ENCODE measurements at regions of chr6 and their contacts with region 1.

Region 1: GRCh38 chr6:35973670-35974222 is 50.7 kb downstream of the SLC26A8 start:
- DNase-seq: no peak
- ATAC-seq: no peak
- H3K4me3 Mint-ChIP-seq: no peak overlapping the region
- H3K27ac Mint-ChIP-seq: no peak overlapping the region
- H3K4me1 Mint-ChIP-seq: no peaks in the 10 kb centered on the region
- H3K27me3 Mint-ChIP-seq: peaks cover 3% of the 10 kb centered on the region
- CTCF ChIP-seq: no peak

Region 2: DNA sequence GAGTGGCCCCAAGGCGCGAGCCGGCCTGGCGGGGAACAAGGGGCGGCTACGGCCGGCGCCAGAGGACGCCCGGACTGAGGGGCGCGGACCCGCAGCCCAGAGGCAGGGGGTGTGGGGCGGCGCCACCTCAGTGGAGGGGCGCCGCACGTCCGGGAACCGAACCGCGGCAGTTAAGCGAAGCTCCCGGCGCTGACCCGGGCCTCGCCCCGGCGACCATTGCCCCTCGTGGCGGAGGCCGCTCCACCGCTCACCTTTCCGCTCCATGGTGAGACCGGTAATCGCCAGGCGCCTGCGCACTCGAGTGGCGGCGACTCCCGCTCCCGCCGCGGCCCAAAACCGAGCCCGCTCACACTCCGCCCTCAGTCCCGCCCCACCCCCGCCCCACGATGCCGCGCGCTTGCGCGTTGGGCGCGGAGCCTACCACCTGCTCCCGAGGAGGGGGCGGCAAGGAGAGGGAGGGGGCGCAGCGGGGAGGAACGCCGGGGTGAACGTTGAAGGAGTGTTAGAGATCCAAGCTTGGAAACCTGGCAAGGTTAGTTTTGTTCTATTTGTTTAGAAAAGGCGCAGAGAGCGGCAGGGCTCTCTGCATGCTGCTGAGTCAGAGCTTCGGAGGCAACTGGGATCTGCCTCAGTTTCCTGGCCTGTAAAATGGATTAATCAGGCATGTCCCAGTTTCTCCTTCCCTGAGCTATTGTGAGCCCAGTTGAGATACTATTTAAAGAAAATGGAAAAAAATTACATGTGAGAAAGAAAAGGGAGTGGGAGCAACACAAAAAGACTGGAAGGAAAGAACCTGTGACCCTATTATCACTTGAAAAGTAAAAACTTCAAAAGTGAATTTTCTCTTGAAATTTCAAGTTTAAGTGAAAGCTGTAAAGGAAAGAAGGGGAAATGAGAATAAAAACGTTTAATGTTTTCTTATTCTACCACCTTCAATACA is 52.7 kb before region 1 on chr6 and contains the start of gene SRPK1:
- CTCF ChIA-PET with region 1: no interaction called
- POLR2A ChIA-PET with region 1: interaction called, 11 read pairs
- intact Hi-C with region 1: no loop called
- DNase-seq: peak; percentile 78
- ATAC-seq: peak; percentile 88
- H3K4me3 Mint-ChIP-seq: peak within 1 kb of the TSS; percentile 92
- H3K27ac Mint-ChIP-seq: peak within 1 kb of the TSS; percentile 86
- H3K4me1 Mint-ChIP-seq: peaks cover 33% of the 10 kb centered on the region
- H3K27me3 Mint-ChIP-seq: no peaks in the 10 kb centered on the region
- CTCF ChIP-seq: no peak
- total RNA-seq, gene SRPK1: 49.6 and 51.5 TPM in 2 replicates

Region 3: DNA sequence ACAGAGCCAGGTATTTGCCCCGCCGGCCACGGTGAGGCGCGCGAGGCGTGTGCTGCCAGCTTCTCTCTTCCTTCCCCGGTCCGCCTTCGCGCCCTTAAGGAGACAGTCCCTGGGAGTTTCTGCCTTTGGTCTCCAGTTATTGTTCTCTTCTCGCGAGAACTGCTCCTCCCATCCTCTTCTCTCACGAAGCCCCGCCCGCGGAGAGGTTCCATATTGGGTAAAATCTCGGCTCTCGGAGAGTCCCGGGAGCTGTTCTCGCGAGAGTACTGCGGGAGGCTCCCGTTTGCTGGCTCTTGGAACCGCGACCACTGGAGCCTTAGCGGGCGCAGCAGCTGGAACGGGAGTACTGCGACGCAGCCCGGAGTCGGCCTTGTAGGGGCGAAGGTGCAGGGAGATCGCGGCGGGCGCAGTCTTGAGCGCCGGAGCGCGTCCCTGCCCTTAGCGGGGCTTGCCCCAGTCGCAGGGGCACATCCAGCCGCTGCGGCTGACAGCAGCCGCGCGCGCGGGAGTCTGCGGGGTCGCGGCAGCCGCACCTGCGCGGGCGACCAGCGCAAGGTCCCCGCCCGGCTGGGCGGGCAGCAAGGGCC is 53.8 kb after region 1 on chr6 and contains the start of gene MAPK14:
- CTCF ChIA-PET with region 1: no interaction called
- POLR2A ChIA-PET with region 1: no interaction called
- intact Hi-C with region 1: no loop called
- DNase-seq: peak; percentile 92
- ATAC-seq: peak; percentile 91
- H3K4me3 Mint-ChIP-seq: peak within 1 kb of the TSS; percentile 92
- H3K27ac Mint-ChIP-seq: peak within 1 kb of the TSS; percentile 95
- H3K4me1 Mint-ChIP-seq: peaks cover 40% of the 10 kb centered on the region
- H3K27me3 Mint-ChIP-seq: peaks cover 16% of the 10 kb centered on the region
- CTCF ChIP-seq: no peak
- total RNA-seq, gene MAPK14: 39.7 and 45.4 TPM in 2 replicates